Psoas muscle (tissue), 8 donors: ENCODE measurements at regions of chr19 and their contacts with region 1.

Region 1: DNA sequence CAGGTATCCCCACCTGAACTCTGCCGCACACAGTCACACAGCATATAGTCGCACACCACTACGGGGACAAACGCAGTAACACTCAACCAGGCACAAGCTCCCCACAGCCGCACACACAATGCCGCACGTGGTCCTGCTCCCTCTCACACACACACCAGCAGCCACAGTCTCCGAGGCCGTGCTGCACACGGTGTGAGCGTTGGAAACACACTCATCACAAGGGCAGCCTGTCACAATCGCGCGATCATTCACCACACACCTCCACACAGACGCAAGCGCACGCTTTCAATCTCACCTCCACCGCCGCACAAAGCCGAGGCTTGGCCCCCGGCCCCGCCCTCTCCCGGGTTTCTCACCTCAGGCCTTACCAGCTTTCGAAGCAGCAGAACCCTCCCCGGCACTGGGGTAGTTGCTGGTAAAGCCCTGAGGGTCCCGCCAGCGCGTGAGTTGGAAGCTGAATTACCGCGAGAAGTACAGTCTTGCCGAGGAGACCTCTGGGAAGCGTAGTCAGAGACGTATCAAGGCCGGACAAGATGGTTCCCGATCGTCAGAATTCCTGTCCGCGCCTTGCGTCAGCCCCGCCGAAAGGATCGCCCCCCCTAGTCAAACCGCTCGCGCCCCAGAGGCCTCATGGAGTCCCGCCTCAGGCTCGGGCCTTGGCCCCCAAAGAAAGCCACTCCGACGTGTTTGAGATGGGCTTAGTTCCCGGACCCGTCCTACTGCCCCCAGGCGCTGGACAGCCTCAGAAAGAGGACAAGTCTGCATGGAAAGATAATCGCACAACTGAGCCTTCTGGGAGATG is at the start of gene ZNF566:
- DNase-seq: peak; percentile 89 to 93
- ATAC-seq: peak; percentile 99 to 100 (median 99)
- H3K4me3 ChIP-seq: peak within 1 kb of the TSS; percentile 97
- H3K27ac ChIP-seq: peak within 1 kb of the TSS; percentile 96
- H3K4me1 ChIP-seq: peaks cover 9% of the 10 kb centered on the region
- H3K27me3 ChIP-seq: no peaks in the 10 kb centered on the region
- CTCF ChIP-seq: no peak
- total RNA-seq, gene ZNF566: 5.2 to 8.0 (median 6.1) TPM

Region 2: GRCh38 chr19:36182612-36183244 is 306.6 kb before region 1 on chr19:
- intact Hi-C with region 1: loop called in 1 of 2 experiments (anchors 10 kb)
- DNase-seq: no peak
- ATAC-seq: peak; percentile 39 to 51 (median 44)
- H3K4me3 ChIP-seq: no peak overlapping the region
- H3K27ac ChIP-seq: peak overlapping the region; percentile 77
- H3K4me1 ChIP-seq: peaks cover 3% of the 10 kb centered on the region
- H3K27me3 ChIP-seq: no peaks in the 10 kb centered on the region
- CTCF ChIP-seq: no peak